Heart right ventricle (tissue), 16 donors: ENCODE measurements at regions of chr12 and their contacts with region 1.

Region 1: DNA sequence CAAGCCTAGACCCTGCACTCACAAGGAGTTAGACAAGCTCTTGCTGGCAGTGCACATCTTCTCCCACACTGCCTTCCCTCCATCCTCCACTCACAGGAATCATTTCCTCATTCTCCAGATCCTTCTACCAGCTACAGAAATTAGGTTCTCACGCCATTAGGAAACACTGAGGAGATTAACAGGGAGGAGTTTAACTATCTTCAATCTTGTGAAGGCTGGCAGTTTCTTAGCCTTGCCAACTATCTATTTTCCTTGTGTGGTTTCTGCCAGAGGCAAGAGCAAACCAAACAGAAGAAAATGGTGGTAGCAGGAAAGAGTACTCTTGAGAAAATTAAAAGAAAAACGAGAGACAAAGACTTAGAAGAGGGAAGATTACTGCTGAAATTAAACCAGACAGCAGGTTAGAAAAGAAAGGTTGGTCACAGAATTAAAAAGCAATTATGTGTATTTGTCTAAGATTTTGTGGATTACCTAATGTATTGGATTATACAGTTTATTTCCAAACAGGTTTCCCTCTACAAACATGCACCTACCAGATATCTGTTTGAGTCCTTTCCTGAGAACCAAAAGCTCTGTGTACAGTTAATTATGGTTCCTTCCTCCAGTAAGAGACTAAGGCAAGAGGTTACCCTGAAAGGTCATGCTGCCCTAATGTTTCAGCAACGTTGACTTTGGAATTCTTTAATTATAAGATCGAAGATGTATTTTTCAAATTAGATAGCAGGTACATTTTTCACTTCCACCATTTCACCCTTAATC is 5.0 kb downstream of the RERG start:
- DNase-seq: no peak
- ATAC-seq: no peak
- H3K4me3 ChIP-seq: no peak overlapping the region
- H3K27ac ChIP-seq: peak overlapping the region in 5 of 10 donors; percentile 39 to 64 (median 61)
- H3K4me1 ChIP-seq: peaks cover 0 to 18% (median 5%) of the 10 kb centered on the region in 9 donors
- H3K27me3 ChIP-seq: peaks cover 0 to 32% (median 0%) of the 10 kb centered on the region in 7 donors
- CTCF ChIP-seq: no peak

Region 2: GRCh38 chr12:15165012-15165659 is 51.1 kb before region 1 on chr12:
- intact Hi-C with region 1: loop called in 1 of 10 experiments (anchors 5 kb)
- DNase-seq: no peak
- ATAC-seq: peak; percentile 46 to 83 (median 72)
- H3K4me3 ChIP-seq: no peak overlapping the region
- H3K27ac ChIP-seq: peak overlapping the region; percentile 32 to 75 (median 67)
- H3K4me1 ChIP-seq: peaks cover 0 to 33% (median 3%) of the 10 kb centered on the region in 9 donors
- H3K27me3 ChIP-seq: no peaks in the 10 kb centered on the region
- CTCF ChIP-seq: no peak

Region 3: DNA sequence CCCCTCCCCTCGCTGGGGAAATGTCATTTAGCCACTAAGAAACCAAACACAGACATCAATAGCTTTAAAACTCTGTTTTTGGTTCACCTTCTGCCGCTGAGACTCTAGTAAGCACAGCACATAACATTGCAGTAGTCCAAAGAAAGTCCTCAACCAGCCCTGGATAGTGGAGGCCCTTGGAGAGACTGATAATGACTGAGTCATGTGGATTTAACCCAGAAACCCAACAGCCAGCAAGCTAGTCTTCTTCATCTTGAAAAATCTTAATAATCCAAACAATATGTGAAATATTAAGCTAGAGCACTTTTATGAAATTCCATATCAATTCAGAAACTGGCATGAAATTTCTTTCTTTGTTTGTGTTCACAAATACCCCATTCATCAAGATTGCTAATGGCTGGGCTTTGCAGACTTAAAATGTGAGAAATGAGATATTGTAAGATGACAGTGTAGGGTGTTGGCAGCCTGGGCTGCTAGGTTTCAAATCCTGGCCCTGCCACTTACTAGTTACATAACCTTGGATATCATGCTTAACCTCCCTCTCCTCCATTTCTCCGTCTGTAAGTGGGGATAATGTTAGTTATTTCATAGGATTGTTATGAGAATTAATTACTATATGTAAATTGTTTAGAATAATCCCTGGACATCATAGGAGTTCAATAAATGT is 35.1 kb before region 1 on chr12:
- intact Hi-C with region 1: loop called in 1 of 10 experiments (anchors 5 kb)
- DNase-seq: no peak
- ATAC-seq: peak; percentile 65 to 90 (median 81)
- H3K4me3 ChIP-seq: no peak overlapping the region
- H3K27ac ChIP-seq: peak overlapping the region in 8 of 10 donors; percentile 9 to 64 (median 56)
- H3K4me1 ChIP-seq: peaks cover 0 to 18% (median 7%) of the 10 kb centered on the region in 9 donors
- H3K27me3 ChIP-seq: peaks cover 0 to 4% (median 0%) of the 10 kb centered on the region in 7 donors
- CTCF ChIP-seq: no peak